Panc1 (cell line): ENCODE measurements at regions of chr15 and their contacts with region 1.

Region 1: DNA sequence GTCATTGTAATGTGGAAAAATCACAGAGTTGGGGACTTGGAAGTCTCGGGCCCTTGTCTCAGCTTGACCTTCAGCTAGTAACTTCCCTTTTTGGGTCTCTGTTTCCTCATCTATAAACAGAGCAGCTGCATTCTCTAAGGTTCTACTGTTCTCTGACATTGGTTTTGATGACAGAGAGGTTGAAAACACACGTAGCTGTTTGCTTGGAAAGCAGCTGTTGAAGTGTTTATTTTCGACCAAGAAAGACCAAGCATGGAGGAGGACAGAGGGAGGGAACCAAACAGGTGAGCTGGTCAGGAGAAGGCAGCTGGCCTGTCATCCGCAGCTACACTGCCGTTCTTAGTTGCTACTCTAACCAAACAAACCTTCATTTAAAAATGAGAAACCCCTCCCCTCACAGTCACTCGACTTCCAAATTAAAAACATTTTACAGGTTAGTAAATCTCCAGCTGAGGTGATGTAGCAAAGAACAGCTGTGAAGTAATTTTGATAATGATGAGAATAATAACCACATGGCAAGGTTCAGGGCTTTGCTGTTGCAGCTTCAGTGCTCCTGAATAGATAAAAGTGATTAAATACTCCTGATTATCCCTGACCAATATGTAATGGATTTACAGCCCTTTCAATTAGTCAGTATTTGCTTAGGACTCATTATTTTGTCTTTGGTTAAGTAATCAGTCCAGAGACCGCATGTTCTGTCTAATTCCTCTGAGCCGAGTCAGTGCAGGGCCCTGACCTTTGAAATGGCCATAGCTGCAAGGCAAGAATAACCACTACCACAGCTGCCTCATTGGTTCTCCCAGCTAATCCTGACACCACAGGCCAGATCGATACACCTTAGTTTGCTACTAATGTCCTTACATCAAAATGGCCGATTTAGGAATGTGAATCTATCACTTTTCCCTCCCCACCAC is 65.3 kb downstream of the MEIS2 start:
- DNase-seq: no peak
- ATAC-seq: no peak
- H3K4me3 ChIP-seq: no peak overlapping the region
- H3K27ac ChIP-seq: no peak overlapping the region
- H3K4me1 ChIP-seq: peaks cover 6% of the 10 kb centered on the region; the same call in 1 of the 2 replicates
- H3K27me3 ChIP-seq: no peaks in the 10 kb centered on the region
- CTCF ChIP-seq: no peak

Region 2: DNA sequence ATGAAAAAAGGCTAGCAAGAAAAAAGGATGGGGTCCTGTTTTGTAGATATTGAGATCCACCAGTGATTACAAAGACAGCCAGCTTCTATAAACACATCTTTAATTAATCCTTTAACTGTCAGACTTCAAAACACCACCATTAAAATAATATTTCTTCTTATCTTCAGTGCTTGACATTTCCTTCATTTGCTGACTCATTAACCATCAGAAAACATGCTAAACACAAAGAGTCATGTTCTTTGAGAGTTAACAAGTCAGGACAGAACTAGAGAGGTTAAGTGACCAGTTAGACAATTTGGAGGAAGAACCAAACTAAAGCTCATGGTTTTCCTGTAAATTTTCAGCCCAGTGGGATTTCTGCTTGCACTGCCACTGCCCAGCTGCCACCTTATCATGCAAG is 46.1 kb before region 1 on chr15:
- CTCF ChIA-PET with region 1: no interaction called
- POLR2A ChIA-PET with region 1: no interaction called
- in situ Hi-C with region 1: no loop called
- intact Hi-C with region 1: no loop called
- DNase-seq: no peak
- ATAC-seq: no peak
- H3K4me3 ChIP-seq: no peak overlapping the region
- H3K27ac ChIP-seq: no peak overlapping the region
- H3K4me1 ChIP-seq: no peaks in the 10 kb centered on the region
- H3K27me3 ChIP-seq: no peaks in the 10 kb centered on the region
- CTCF ChIP-seq: no peak

Region 3: GRCh38 chr15:37020852-37021251 is 14.2 kb before region 1 on chr15:
- CTCF ChIA-PET with region 1: interaction called, 5 read pairs
- POLR2A ChIA-PET with region 1: interaction called, 18 read pairs
- in situ Hi-C with region 1: no loop called
- intact Hi-C with region 1: no loop called
- DNase-seq: no peak
- ATAC-seq: no peak
- H3K4me3 ChIP-seq: no peak overlapping the region
- H3K27ac ChIP-seq: no peak overlapping the region
- H3K4me1 ChIP-seq: peaks cover 5% of the 10 kb centered on the region; the same call in 1 of the 2 replicates
- H3K27me3 ChIP-seq: no peaks in the 10 kb centered on the region
- CTCF ChIP-seq: no peak